ENCODE measurements at regions of chr6 and their contacts with region 1.

Region 1: GRCh38 chr6:34515473-34516387 is 40.4 kb downstream of the SPDEF start:
- DNase-seq: no peak
- ATAC-seq: no peak
- H3K4me3 ChIP-seq: no peak overlapping the region
- H3K27ac ChIP-seq: no peak overlapping the region
- H3K4me1 ChIP-seq: no peaks in the 10 kb centered on the region
- CTCF ChIP-seq: no peak
- EP300 ChIP-seq: no peak
- POLR2A ChIP-seq: no peak
- RAD21 ChIP-seq: no peak

Region 2: GRCh38 chr6:34465531-34466241 is 50.0 kb before region 1 on chr6 and contains the start of gene PACSIN1:
- CTCF ChIA-PET with region 1: no interaction called
- POLR2A ChIA-PET with region 1: no interaction called
- DNase-seq: no peak
- ATAC-seq: no peak
- H3K4me3 ChIP-seq: no peak within 1 kb of the TSS
- H3K27ac ChIP-seq: no peak within 1 kb of the TSS
- H3K4me1 ChIP-seq: peaks cover 10% of the 10 kb centered on the region
- CTCF ChIP-seq: no peak
- EP300 ChIP-seq: no peak
- POLR2A ChIP-seq: no peak
- RAD21 ChIP-seq: no peak
- polyA plus RNA-seq, gene PACSIN1: 0.30 and 0.33 TPM in 2 replicates

Region 3: GRCh38 chr6:34526992-34527728 is 11.4 kb after region 1 on chr6:
- CTCF ChIA-PET with region 1: interaction called, 15 read pairs
- POLR2A ChIA-PET with region 1: no interaction called
- DNase-seq: peak; percentile 85 to 91
- ATAC-seq: peak; percentile 86 to 95
- H3K4me3 ChIP-seq: peak overlapping the region; percentile 29; the same call in 1 of the 3 replicates
- H3K27ac ChIP-seq: peak overlapping the region; percentile 75 to 77
- H3K4me1 ChIP-seq: peaks cover 23% of the 10 kb centered on the region
- CTCF ChIP-seq: peak; percentile 54
- EP300 ChIP-seq: no peak
- POLR2A ChIP-seq: 0 out of 2 replicates have a peak, but pooled peaks have one; percentile 20
- RAD21 ChIP-seq: peak; percentile 56 to 75